ENCODE measurements at regions of chr5 and their contacts with region 1.

Region 1: DNA sequence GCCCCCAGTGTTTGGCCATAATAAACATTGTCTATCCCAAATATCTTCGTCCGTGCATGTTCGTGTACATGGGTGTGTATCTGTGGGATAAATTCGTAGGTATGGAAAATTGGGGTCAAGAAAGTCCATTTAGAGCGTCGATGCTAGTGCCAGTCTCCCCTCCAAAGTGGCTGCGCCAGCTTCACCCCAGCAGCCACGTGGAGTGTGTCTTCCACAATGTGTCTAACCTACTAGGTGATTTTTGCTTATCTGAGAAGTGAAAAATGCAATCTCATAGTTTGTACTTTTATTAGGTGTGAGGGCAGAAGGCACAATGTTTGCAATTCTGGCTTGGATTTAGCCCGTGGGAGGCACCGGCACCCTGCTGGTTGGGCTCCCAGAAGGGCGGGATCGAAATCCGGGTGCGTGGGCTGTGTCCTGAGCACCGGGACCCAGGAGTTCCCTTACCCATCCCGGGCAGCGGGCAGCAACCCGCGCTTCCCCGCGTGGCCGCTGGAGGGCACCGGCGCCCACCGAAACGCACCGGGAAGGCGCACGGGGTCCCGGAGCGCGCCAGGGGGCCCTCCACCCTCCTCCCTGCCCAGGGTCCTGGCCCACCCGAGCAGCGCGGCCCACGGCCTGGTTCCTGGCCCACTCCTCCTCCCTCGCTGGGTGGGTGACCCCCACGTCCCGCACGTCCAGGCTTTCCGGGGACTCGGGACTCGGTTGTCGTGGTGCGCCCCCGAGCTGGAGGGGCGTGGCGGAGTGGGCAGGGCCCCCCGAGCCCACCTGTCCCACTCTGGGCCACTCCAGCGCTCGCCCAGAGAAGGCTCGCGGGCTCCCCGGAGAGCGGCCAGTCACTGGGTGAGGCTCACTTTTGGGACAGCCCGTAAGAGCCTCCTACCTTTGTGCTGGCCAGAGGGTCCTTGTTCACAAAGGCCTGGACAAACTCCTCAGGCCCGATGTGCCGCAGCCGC is 55.4 kb upstream of the RNF130 start:
- DNase-seq: peak; percentile 41 to 73
- H3K4me3 ChIP-seq: no peak overlapping the region
- H3K4me3 Mint-ChIP-seq: peak overlapping the region; percentile 7
- H3K27ac Mint-ChIP-seq: no peak overlapping the region
- H3K4me1 ChIP-seq: 0 out of 2 replicates have a peak, but pooled peaks cover 4% of the 10 kb centered on the region
- H3K4me1 Mint-ChIP-seq: peaks cover 20% of the 10 kb centered on the region
- H3K27me3 ChIP-seq: no peaks in the 10 kb centered on the region
- H3K27me3 Mint-ChIP-seq: peaks cover 25% of the 10 kb centered on the region
- CTCF ChIP-seq: peak; percentile 89 to 91

Region 2: GRCh38 chr5:179720222-179720621 is 406.8 kb before region 1 on chr5:
- CTCF ChIA-PET with region 1: no interaction called
- POLR2A ChIA-PET with region 1: no interaction called
- intact Hi-C with region 1: no loop called
- DNase-seq: no peak
- H3K4me3 ChIP-seq: no peak overlapping the region
- H3K4me3 Mint-ChIP-seq: no peak overlapping the region
- H3K27ac Mint-ChIP-seq: no peak overlapping the region
- H3K4me1 ChIP-seq: no peaks in the 10 kb centered on the region
- H3K4me1 Mint-ChIP-seq: no peaks in the 10 kb centered on the region
- H3K27me3 ChIP-seq: no peaks in the 10 kb centered on the region
- H3K27me3 Mint-ChIP-seq: no peaks in the 10 kb centered on the region
- CTCF ChIP-seq: no peak

Region 3: DNA sequence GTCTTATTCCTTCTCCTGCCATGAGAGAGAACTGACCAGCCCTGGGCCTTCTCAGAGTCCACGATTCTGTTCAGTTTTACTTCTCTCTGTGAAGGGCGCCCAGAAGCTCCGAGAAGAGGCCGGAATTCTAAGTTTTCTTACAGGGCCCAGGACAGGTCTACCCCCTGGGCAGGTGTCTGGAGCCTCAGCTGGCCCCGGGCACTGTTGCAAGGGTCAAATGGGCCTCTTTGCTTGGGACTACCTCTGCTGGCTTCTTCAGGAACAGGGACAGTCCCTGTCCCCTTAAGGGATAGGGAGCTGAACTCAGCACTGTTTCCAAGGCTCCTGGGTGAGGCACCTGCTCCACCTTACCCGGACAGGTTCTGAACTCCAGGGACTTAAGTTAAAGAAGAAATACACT is 27.0 kb after region 1 on chr5:
- CTCF ChIA-PET with region 1: no interaction called
- POLR2A ChIA-PET with region 1: no interaction called
- intact Hi-C with region 1: no loop called
- DNase-seq: no peak
- H3K4me3 ChIP-seq: no peak overlapping the region
- H3K4me3 Mint-ChIP-seq: no peak overlapping the region
- H3K27ac Mint-ChIP-seq: no peak overlapping the region
- H3K4me1 ChIP-seq: no peaks in the 10 kb centered on the region
- H3K4me1 Mint-ChIP-seq: no peaks in the 10 kb centered on the region
- H3K27me3 ChIP-seq: no peaks in the 10 kb centered on the region
- H3K27me3 Mint-ChIP-seq: peaks cover 11% of the 10 kb centered on the region
- CTCF ChIP-seq: no peak

Region 4: GRCh38 chr5:180172450-180173197 is 45.6 kb after region 1 on chr5:
- CTCF ChIA-PET with region 1: no interaction called
- POLR2A ChIA-PET with region 1: no interaction called
- intact Hi-C with region 1: no loop called
- DNase-seq: no peak
- H3K4me3 ChIP-seq: no peak overlapping the region
- H3K4me3 Mint-ChIP-seq: no peak overlapping the region
- H3K27ac Mint-ChIP-seq: peak overlapping the region; percentile 15
- H3K4me1 ChIP-seq: no peaks in the 10 kb centered on the region
- H3K4me1 Mint-ChIP-seq: no peaks in the 10 kb centered on the region
- H3K27me3 ChIP-seq: no peaks in the 10 kb centered on the region
- H3K27me3 Mint-ChIP-seq: no peaks in the 10 kb centered on the region
- CTCF ChIP-seq: no peak

Region 5: GRCh38 chr5:180209137-180209581 is 82.2 kb after region 1 on chr5 and contains the start of gene RASGEF1C:
- CTCF ChIA-PET with region 1: no interaction called
- POLR2A ChIA-PET with region 1: no interaction called
- intact Hi-C with region 1: loop called (anchors 10 kb)
- DNase-seq: peak in 1 of 2 experiments; percentile 85
- H3K4me3 ChIP-seq: peak within 1 kb of the TSS; percentile 53
- H3K4me3 Mint-ChIP-seq: peak within 1 kb of the TSS; percentile 64
- H3K27ac Mint-ChIP-seq: no peak within 1 kb of the TSS
- H3K4me1 ChIP-seq: peaks cover 7% of the 10 kb centered on the region
- H3K4me1 Mint-ChIP-seq: peaks cover 6% of the 10 kb centered on the region
- H3K27me3 ChIP-seq: no peaks in the 10 kb centered on the region
- H3K27me3 Mint-ChIP-seq: peaks cover 11% of the 10 kb centered on the region
- CTCF ChIP-seq: peak in 1 of 2 experiments; percentile 22
- total RNA-seq, gene RASGEF1C: not detected in 2 replicates

Measured in Caco-2 (cell line).